T-cell (primary cell): ENCODE measurements at regions of chr15 and their contacts with region 1.

Region 1: DNA sequence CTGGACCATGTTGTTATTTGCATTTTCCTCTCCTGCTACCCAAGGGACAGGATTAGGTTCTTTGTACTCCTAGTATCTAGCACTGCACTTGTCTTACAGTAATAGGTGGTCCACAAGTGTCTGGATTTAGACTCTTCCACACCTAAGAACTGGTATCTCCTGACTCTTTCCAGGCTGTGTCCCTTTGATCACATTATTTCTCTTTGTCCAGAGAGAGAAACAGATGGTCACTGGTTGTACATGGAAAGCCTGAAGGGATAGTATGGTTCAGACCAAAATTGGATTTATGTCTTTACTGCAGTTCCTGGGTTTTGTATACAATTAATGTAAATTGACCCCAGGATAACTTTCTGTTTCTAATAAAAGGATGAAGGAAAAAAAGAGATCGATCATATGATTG is 64.0 kb downstream of the PDE8A start:
- DNase-seq: no peak
- ATAC-seq: no peak
- H3K4me3 ChIP-seq: no peak overlapping the region
- H3K4me3 Mint-ChIP-seq: no peak overlapping the region
- H3K27ac ChIP-seq: no peak overlapping the region
- H3K27ac Mint-ChIP-seq: peak overlapping the region; percentile 31 to 34
- H3K4me1 ChIP-seq: no peaks in the 10 kb centered on the region
- H3K4me1 Mint-ChIP-seq: peaks cover 24 to 52% (median 47%) of the 10 kb centered on the region in 3 donors
- H3K27me3 ChIP-seq: no peaks in the 10 kb centered on the region
- H3K27me3 Mint-ChIP-seq: no peaks in the 10 kb centered on the region

Region 2: GRCh38 chr15:84955089-84955848 is 90.3 kb before region 1 on chr15:
- CTCF ChIA-PET with region 1: interaction called in 1 of 2 experiments, 10 read pairs
- POLR2A ChIA-PET with region 1: no interaction called
- DNase-seq: peak in 29 of 35 experiments; percentile 2 to 62 (median 23)
- ATAC-seq: peak; percentile 50 to 67 (median 56)
- H3K4me3 ChIP-seq: no peak overlapping the region
- H3K4me3 Mint-ChIP-seq: peak overlapping the region in 1 of 3 donors; percentile 7
- H3K27ac ChIP-seq: no peak overlapping the region
- H3K27ac Mint-ChIP-seq: no peak overlapping the region
- H3K4me1 ChIP-seq: peaks cover 0 to 4% of the 10 kb centered on the region in 2 experiments
- H3K4me1 Mint-ChIP-seq: peaks cover 4 to 8% (median 7%) of the 10 kb centered on the region in 3 donors
- H3K27me3 ChIP-seq: peaks cover 0 to 11% of the 10 kb centered on the region in 2 experiments
- H3K27me3 Mint-ChIP-seq: peaks cover 5 to 11% of the 10 kb centered on the region in 2 donors

Region 3: GRCh38 chr15:85059734-85060133 is 14.1 kb after region 1 on chr15:
- CTCF ChIA-PET with region 1: no interaction called
- POLR2A ChIA-PET with region 1: no interaction called
- DNase-seq: no peak
- ATAC-seq: no peak
- H3K4me3 ChIP-seq: no peak overlapping the region
- H3K4me3 Mint-ChIP-seq: no peak overlapping the region
- H3K27ac ChIP-seq: no peak overlapping the region
- H3K27ac Mint-ChIP-seq: no peak overlapping the region
- H3K4me1 ChIP-seq: no peaks in the 10 kb centered on the region
- H3K4me1 Mint-ChIP-seq: peaks cover 30 to 50% (median 39%) of the 10 kb centered on the region in 3 donors
- H3K27me3 ChIP-seq: no peaks in the 10 kb centered on the region
- H3K27me3 Mint-ChIP-seq: no peaks in the 10 kb centered on the region